A549 (cell line): ENCODE measurements at regions of chr7 and their contacts with region 1.

Region 1: GRCh38 chr7:74401137-74401859 is 52.4 kb upstream of the GTF2IRD1 start:
- DNase-seq: peak; percentile 66 to 72
- ATAC-seq: peak; percentile 74 to 87
- H3K4me3 ChIP-seq: no peak overlapping the region
- H3K27ac ChIP-seq: no peak overlapping the region
- H3K4me1 ChIP-seq: no peaks in the 10 kb centered on the region
- CTCF ChIP-seq: peak; percentile 92
- EP300 ChIP-seq: no peak
- POLR2A ChIP-seq: no peak
- RAD21 ChIP-seq: peak; percentile 94 to 96

Region 2: DNA sequence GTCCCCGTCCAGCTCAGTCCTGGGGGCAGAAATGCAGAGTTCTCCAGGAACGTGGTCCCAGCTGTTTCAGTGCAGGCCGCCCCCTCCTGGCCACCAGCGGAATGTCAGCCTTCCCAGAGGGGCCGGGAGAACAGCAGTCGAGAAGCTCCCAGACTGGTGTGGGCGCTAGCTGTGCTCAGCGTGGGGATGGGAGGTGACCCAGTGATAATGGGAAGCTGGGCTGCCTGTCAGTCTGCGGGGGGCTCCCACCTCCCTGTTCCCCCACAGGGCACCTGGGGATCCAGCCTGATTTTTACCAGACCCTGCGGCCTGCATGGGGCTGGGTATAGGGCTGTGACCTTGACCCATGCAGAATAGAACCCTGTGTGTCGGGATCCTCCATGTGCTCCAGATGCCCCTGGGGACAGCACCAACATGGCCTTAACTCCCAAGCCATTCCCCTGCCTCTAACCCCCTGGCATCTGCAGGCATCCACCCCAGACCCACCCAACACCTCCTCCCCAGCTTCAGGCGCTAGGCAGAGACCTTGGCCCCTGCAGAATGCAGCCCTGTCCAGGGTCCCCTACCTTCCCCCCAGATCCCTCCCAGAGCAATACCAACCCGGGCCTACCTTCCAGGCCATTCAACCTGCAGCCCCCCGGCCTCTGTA is 374.3 kb before region 1 on chr7:
- CTCF ChIA-PET with region 1: interaction called, 12 read pairs
- POLR2A ChIA-PET with region 1: no interaction called
- DNase-seq: peak; percentile 54 to 75
- ATAC-seq: peak; percentile 60 to 88
- H3K4me3 ChIP-seq: no peak overlapping the region
- H3K27ac ChIP-seq: peak overlapping the region; percentile 36 to 46; a peak in 2 of 6 replicates
- H3K4me1 ChIP-seq: peaks cover 40% of the 10 kb centered on the region
- CTCF ChIP-seq: peak; percentile 78
- EP300 ChIP-seq: no peak
- POLR2A ChIP-seq: no peak
- RAD21 ChIP-seq: peak; percentile 77 to 81

Region 3: GRCh38 chr7:74193054-74193453 is 208.2 kb before region 1 on chr7:
- CTCF ChIA-PET with region 1: interaction called, 684 read pairs
- POLR2A ChIA-PET with region 1: no interaction called
- DNase-seq: no peak
- ATAC-seq: no peak
- H3K4me3 ChIP-seq: no peak overlapping the region
- H3K27ac ChIP-seq: no peak overlapping the region
- H3K4me1 ChIP-seq: peaks cover 3% of the 10 kb centered on the region
- CTCF ChIP-seq: no peak
- EP300 ChIP-seq: no peak
- POLR2A ChIP-seq: no peak
- RAD21 ChIP-seq: no peak

Region 4: GRCh38 chr7:74246497-74246896 is 154.8 kb before region 1 on chr7:
- CTCF ChIA-PET with region 1: interaction called, 14 read pairs
- POLR2A ChIA-PET with region 1: no interaction called
- DNase-seq: no peak
- ATAC-seq: no peak
- H3K4me3 ChIP-seq: no peak overlapping the region
- H3K27ac ChIP-seq: no peak overlapping the region
- H3K4me1 ChIP-seq: no peaks in the 10 kb centered on the region
- CTCF ChIP-seq: no peak
- EP300 ChIP-seq: no peak
- POLR2A ChIP-seq: no peak
- RAD21 ChIP-seq: no peak

Region 5: GRCh38 chr7:74289018-74289658 is 112.2 kb before region 1 on chr7 and contains the start of gene CLIP2:
- CTCF ChIA-PET with region 1: interaction called, 18 read pairs
- POLR2A ChIA-PET with region 1: no interaction called
- DNase-seq: peak; percentile 64 to 83
- ATAC-seq: peak; percentile 73 to 77
- H3K4me3 ChIP-seq: peak within 1 kb of the TSS; percentile 88
- H3K27ac ChIP-seq: peak within 1 kb of the TSS; percentile 89 to 97
- H3K4me1 ChIP-seq: peaks cover 61% of the 10 kb centered on the region
- CTCF ChIP-seq: no peak
- EP300 ChIP-seq: no peak
- POLR2A ChIP-seq: peak; percentile 71
- RAD21 ChIP-seq: peak in 1 of 2 experiments; percentile 48; a peak in 3 of 5 replicates
- polyA plus RNA-seq, gene CLIP2: 3.7 and 5.7 TPM in 2 replicates

Region 6: DNA sequence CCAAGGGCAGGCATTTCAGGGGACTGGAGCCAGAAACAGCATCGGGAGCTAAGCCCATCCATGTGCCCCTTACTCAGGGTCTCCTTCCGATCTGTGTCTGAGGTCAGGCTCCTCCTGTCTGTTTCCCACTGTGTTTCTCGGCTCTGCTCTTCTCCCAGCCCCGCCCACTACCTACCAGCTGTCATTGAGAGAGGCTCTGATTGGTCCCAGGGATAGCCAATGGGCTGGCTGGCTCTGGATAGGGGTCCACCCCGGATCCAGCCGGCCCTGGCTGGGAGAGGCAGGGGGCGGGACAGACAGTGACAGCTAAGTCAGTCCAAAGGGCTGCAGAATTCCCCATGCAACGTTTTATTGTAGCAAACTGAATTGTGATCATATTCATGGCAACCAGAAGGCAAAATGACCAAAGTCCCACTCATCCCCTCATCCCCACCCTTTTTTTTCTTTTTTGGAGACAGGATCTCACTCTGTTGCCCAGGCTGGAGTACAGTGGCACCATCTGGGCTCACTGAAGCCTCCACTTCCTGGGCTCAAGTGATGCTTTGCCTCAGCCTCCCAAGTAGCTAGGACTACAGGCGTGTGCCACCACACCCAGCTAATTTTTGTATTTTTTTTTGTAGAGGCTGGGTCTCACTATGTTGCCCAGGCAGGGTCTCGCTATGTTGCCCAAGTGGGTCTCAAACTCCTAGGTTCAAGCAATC is 35.8 kb before region 1 on chr7:
- CTCF ChIA-PET with region 1: interaction called, 12 read pairs
- POLR2A ChIA-PET with region 1: no interaction called
- DNase-seq: peak; percentile 69 to 95
- ATAC-seq: peak; percentile 82 to 93
- H3K4me3 ChIP-seq: no peak overlapping the region
- H3K27ac ChIP-seq: no peak overlapping the region
- H3K4me1 ChIP-seq: no peaks in the 10 kb centered on the region
- CTCF ChIP-seq: no peak
- EP300 ChIP-seq: no peak
- POLR2A ChIP-seq: no peak
- RAD21 ChIP-seq: no peak

Region 7: DNA sequence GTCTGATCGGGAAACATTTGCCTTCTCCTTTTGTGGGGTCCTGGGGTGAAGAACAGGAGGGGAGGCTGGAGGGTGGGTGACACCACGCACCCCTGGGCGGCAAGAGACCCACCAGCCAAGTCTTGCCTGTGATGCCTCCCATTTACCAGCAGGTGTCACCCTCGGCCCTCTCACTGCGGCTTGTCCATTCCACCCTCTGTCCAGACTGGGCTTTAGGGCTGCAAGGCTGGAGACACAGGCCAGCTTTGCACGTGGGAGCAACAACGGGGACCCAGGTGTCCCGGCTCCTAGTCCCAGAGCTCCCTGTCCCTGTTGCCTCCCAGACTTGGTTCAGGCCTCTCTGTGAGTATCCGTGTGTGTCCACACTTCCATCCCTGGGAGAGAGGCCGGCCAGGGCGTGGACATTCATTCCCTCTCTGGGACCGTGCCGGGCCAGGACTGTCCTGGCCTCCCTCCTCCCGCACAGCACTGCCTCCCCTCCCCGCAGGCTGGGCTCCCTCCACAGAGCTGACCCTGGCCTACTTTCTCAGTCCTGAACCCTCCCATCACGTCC is 16.2 kb after region 1 on chr7:
- CTCF ChIA-PET with region 1: interaction called, 60 read pairs
- POLR2A ChIA-PET with region 1: no interaction called
- DNase-seq: peak; percentile 77 to 95
- ATAC-seq: peak; percentile 94 to 97
- H3K4me3 ChIP-seq: no peak overlapping the region
- H3K27ac ChIP-seq: peak overlapping the region; percentile 70 to 81
- H3K4me1 ChIP-seq: peaks cover 9% of the 10 kb centered on the region
- CTCF ChIP-seq: peak; percentile 93
- EP300 ChIP-seq: no peak
- POLR2A ChIP-seq: no peak
- RAD21 ChIP-seq: peak; percentile 99